MCF 10A (cell line): ENCODE measurements at regions of chr14 and their contacts with region 1.

Region 1: GRCh38 chr14:59897761-59898383 is 22.1 kb upstream of the LRRC9 start:
- DNase-seq: peak; percentile 73
- H3K4me3 Mint-ChIP-seq: no peak overlapping the region
- H3K27ac Mint-ChIP-seq: peak overlapping the region; percentile 54
- H3K4me1 Mint-ChIP-seq: peaks cover 14% of the 10 kb centered on the region
- H3K27me3 Mint-ChIP-seq: no peaks in the 10 kb centered on the region
- CTCF ChIP-seq: peak; percentile 84

Region 2: GRCh38 chr14:59483900-59484638 is 413.8 kb before region 1 on chr14 and contains the starts of genes JKAMP and L3HYPDH:
- CTCF ChIA-PET with region 1: interaction called, 3 read pairs
- POLR2A ChIA-PET with region 1: interaction called, 17 read pairs
- intact Hi-C with region 1: no loop called
- DNase-seq: peak; percentile 96
- H3K4me3 Mint-ChIP-seq: peak within 1 kb of the TSS; percentile 89
- H3K27ac Mint-ChIP-seq: peak within 1 kb of the TSS; percentile 86
- H3K4me1 Mint-ChIP-seq: peaks cover 37% of the 10 kb centered on the region
- H3K27me3 Mint-ChIP-seq: no peaks in the 10 kb centered on the region
- CTCF ChIP-seq: peak; percentile 54
- total RNA-seq, gene JKAMP: 29.7 and 35.8 TPM in 2 replicates
- total RNA-seq, gene L3HYPDH: 32.5 and 35.0 TPM in 2 replicates

Region 3: DNA sequence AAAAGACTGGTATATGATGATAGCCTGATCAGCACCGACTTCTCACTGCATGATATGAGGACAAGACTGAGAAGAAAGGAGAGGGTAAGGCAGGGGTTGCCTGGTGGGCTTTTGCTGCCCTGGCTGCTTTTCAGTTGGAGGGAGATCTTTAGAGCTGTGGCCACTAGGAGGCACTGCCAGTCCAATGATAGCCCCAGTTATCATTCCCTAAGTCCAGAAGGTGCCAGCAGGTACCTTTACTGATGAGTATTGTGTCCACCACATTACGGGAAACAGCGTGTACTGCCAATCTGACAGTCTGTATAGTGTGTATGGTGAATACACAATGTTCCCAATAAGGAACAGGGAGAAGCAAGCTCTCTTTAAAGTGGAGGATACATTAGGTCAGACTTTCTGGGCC is 265.5 kb before region 1 on chr14:
- CTCF ChIA-PET with region 1: interaction called, 166 read pairs
- POLR2A ChIA-PET with region 1: interaction called, 21 read pairs
- intact Hi-C with region 1: loop called (anchors 1 kb)
- DNase-seq: peak; percentile 65
- H3K4me3 Mint-ChIP-seq: no peak overlapping the region
- H3K27ac Mint-ChIP-seq: no peak overlapping the region
- H3K4me1 Mint-ChIP-seq: peaks cover 21% of the 10 kb centered on the region
- H3K27me3 Mint-ChIP-seq: no peaks in the 10 kb centered on the region
- CTCF ChIP-seq: peak; percentile 80

Region 4: DNA sequence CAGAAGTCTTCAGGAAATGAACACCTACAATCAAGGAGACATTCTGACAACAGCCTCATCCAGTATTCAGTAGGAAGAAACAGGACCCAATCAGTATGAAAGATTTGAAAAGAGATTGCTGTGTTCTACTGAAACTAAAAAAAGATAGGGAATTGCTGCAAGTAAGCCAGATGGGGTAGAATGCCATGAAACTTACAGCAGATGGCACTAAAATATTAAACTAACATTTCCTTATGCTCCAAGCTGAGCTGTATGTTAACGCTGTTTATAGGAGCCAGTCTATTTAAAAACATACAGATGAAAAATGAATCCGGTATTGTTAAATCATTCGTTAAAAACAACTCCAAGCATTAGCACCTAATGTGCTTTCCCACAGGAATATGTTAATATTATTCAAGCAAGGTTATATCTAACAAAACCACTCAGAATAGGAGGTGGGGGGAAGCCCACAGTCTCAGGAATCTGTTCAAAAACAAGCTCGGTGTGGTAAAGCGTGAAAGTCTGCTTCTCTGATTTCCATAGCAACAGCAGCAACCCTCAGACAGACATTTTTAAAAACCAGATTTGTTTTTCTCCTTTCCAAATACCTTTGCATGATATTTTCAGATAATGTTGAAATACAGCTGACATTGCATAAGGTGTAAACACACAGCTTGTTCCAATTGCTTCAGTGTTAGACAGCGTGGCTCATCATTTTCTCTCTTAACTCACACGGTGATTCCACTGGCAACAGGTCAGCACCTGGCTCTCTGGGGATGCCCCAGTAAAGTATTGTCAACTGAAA is 189.9 kb before region 1 on chr14:
- CTCF ChIA-PET with region 1: interaction called, 152 read pairs
- POLR2A ChIA-PET with region 1: interaction called, 27 read pairs
- intact Hi-C with region 1: loop called (anchors 1 kb)
- DNase-seq: peak; percentile 61
- H3K4me3 Mint-ChIP-seq: peak overlapping the region; percentile 2
- H3K27ac Mint-ChIP-seq: peak overlapping the region; percentile 95
- H3K4me1 Mint-ChIP-seq: peaks cover 37% of the 10 kb centered on the region
- H3K27me3 Mint-ChIP-seq: no peaks in the 10 kb centered on the region
- CTCF ChIP-seq: peak; percentile 22

Region 5: GRCh38 chr14:59829469-59830337 is 68.2 kb before region 1 on chr14:
- CTCF ChIA-PET with region 1: no interaction called
- POLR2A ChIA-PET with region 1: no interaction called
- intact Hi-C with region 1: no loop called
- DNase-seq: peak; percentile 61
- H3K4me3 Mint-ChIP-seq: no peak overlapping the region
- H3K27ac Mint-ChIP-seq: peak overlapping the region; percentile 83
- H3K4me1 Mint-ChIP-seq: peaks cover 25% of the 10 kb centered on the region
- H3K27me3 Mint-ChIP-seq: no peaks in the 10 kb centered on the region
- CTCF ChIP-seq: no peak

Region 6: DNA sequence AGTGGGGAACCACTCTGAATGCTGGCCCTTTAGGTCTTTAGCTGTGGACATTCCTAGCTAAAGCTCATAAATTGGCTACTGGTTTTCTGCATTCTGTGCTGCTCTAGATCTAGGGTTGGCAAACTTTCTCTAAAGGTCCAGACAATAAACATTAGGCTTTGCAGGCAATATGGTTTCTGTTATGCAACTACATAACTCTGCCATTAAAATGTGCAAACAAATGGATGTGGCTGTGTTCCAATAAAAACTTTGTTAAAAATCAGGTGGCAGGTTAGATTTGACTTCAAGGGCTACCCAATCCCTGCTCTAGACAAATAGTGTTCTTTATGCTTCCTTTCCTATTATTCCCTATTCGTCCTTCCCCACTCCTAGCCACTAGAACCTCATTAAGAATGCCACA is 15.3 kb after region 1 on chr14:
- CTCF ChIA-PET with region 1: interaction called, 22 read pairs
- POLR2A ChIA-PET with region 1: no interaction called
- intact Hi-C with region 1: no loop called
- DNase-seq: no peak
- H3K4me3 Mint-ChIP-seq: no peak overlapping the region
- H3K27ac Mint-ChIP-seq: no peak overlapping the region
- H3K4me1 Mint-ChIP-seq: peaks cover 6% of the 10 kb centered on the region
- H3K27me3 Mint-ChIP-seq: no peaks in the 10 kb centered on the region
- CTCF ChIP-seq: no peak

Region 7: DNA sequence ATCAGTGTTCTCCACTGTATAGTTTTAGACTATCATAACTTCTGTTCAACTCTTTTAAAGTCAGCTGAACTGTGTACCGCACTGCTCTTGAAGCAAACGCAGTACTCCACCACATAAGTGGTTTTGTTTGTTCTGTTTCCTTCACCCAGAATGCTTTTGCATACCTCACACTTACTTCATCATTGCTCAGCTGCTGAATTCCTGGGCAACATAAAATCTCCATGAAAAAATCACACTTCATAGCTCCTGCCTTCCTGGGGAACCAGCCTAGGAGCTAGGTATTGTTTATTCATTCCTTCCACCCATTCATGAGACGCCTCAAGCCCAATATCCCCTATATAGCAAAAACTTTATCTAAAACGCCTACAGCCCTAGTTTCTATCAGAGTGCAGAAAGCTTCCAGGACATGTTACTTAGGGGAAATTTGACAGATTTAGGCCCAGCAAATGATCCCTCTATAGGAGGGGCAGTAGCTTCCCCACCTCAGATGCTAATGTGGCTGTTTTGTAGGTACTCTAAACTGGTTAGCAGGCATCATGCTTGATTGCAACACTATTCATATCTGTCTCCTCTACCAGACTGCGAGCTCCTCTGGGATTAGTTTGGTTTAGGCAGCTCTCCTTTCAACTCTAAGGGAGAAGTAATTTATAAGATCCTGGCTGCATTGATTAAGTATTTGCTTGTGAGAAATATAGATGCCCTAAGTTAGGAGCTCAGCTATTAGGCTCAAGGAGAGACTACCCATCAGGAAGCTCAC is 66.6 kb after region 1 on chr14:
- CTCF ChIA-PET with region 1: interaction called, 10 read pairs
- POLR2A ChIA-PET with region 1: interaction called, 3 read pairs
- intact Hi-C with region 1: no loop called
- DNase-seq: peak; percentile 3
- H3K4me3 Mint-ChIP-seq: peak overlapping the region; percentile 83
- H3K27ac Mint-ChIP-seq: no peak overlapping the region
- H3K4me1 Mint-ChIP-seq: peaks cover 18% of the 10 kb centered on the region
- H3K27me3 Mint-ChIP-seq: no peaks in the 10 kb centered on the region
- CTCF ChIP-seq: no peak